Caco-2 (cell line): ENCODE measurements at regions of chr16 and their contacts with region 1.

Region 1: DNA sequence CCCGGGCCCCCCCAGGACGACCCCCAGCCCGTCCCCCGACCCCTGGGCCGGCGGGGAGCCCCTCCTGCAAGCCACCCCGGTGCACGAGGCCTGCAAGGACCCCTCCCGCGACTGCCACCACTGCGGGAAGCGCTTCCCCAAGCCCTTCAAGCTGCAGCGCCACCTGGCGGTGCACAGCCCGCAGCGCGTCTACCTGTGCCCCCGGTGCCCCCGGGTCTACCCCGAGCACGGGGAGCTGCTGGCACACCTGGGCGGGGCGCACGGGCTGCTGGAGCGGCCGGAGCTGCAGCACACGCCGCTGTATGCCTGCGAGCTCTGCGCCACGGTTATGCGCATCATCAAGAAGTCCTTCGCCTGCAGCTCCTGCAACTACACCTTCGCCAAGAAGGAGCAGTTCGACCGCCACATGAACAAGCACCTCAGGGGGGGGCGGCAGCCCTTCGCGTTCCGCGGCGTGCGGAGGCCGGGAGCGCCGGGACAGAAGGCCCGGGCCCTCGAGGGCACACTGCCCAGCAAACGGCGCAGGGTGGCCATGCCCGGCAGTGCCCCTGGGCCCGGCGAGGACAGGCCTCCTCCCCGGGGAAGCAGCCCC is 15.6 kb upstream of the ZFPM1 start:
- DNase-seq: peak; percentile 69 to 83
- H3K4me3 ChIP-seq: no peak overlapping the region
- H3K4me3 Mint-ChIP-seq: no peak overlapping the region
- H3K27ac Mint-ChIP-seq: no peak overlapping the region
- H3K4me1 ChIP-seq: 0 out of 2 replicates have a peak, but pooled peaks cover under 1% of the 10 kb centered on the region
- H3K4me1 Mint-ChIP-seq: no peaks in the 10 kb centered on the region
- H3K27me3 ChIP-seq: no peaks in the 10 kb centered on the region
- H3K27me3 Mint-ChIP-seq: no peaks in the 10 kb centered on the region
- CTCF ChIP-seq: peak; percentile 87 to 91

Region 2: DNA sequence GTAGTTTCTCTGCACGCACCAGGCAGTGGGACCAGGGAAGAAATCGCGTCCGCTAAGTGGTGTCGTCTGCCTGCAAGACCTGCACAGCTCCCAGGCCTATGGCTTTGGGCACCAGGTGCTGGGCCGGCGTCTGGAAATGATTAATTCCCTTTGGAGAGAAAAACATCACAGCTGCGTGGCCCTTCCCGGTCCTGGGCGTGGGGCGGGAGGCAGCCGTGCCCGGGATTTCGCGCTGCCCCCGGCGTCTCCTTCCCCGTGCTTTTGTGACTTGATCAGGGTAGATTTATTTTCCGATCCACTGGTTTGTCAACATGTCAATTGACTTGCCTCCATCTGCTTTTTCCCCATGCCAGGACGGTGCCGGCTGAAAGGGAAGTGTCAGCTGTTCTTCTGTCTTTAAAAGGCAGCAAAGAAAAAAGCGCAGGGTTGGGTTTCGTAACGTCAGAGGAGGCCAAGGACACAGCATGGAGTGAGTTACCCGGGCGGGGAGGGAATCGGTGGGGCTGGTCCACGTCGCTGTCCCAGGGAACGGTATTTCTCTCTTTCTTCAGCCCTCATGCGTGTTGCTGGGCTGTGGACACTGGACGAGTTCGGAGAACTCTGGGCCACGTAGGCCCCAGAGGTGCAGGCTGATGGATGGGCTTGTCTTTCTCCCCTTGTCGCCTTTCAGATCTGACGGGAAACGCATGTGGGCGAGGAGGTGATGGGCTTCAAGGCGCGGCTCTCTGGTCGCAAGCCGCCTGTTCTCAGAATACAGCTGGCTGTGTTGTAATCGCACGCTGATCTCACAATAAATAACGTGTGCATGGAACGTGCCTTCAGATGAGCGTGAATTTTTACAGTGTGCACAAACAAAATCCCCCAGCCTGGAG is 242.8 kb before region 1 on chr16:
- CTCF ChIA-PET with region 1: interaction called, 3 read pairs
- POLR2A ChIA-PET with region 1: no interaction called
- intact Hi-C with region 1: loop called (anchors 10 kb)
- DNase-seq: no peak
- H3K4me3 ChIP-seq: no peak overlapping the region
- H3K4me3 Mint-ChIP-seq: no peak overlapping the region
- H3K27ac Mint-ChIP-seq: no peak overlapping the region
- H3K4me1 ChIP-seq: no peaks in the 10 kb centered on the region; the same call in 1 of the 2 replicates
- H3K4me1 Mint-ChIP-seq: no peaks in the 10 kb centered on the region
- H3K27me3 ChIP-seq: no peaks in the 10 kb centered on the region
- H3K27me3 Mint-ChIP-seq: no peaks in the 10 kb centered on the region
- CTCF ChIP-seq: peak in 1 of 2 experiments; percentile 8

Region 3: GRCh38 chr16:88387941-88388627 is 49.4 kb before region 1 on chr16:
- CTCF ChIA-PET with region 1: no interaction called
- POLR2A ChIA-PET with region 1: no interaction called
- intact Hi-C with region 1: no loop called
- DNase-seq: no peak
- H3K4me3 ChIP-seq: no peak overlapping the region
- H3K4me3 Mint-ChIP-seq: no peak overlapping the region
- H3K27ac Mint-ChIP-seq: no peak overlapping the region
- H3K4me1 ChIP-seq: peaks cover 7% of the 10 kb centered on the region
- H3K4me1 Mint-ChIP-seq: no peaks in the 10 kb centered on the region
- H3K27me3 ChIP-seq: peaks cover 2% of the 10 kb centered on the region; the same call in 1 of the 2 replicates
- H3K27me3 Mint-ChIP-seq: peaks cover 27% of the 10 kb centered on the region
- CTCF ChIP-seq: no peak

Region 4: GRCh38 chr16:88497561-88498462 is 60.3 kb after region 1 on chr16:
- CTCF ChIA-PET with region 1: no interaction called
- POLR2A ChIA-PET with region 1: no interaction called
- intact Hi-C with region 1: no loop called
- DNase-seq: peak; percentile 82 to 93
- H3K4me3 ChIP-seq: no peak overlapping the region
- H3K4me3 Mint-ChIP-seq: peak overlapping the region; percentile 43
- H3K27ac Mint-ChIP-seq: peak overlapping the region; percentile 85
- H3K4me1 ChIP-seq: peaks cover 57% of the 10 kb centered on the region
- H3K4me1 Mint-ChIP-seq: peaks cover 36% of the 10 kb centered on the region
- H3K27me3 ChIP-seq: no peaks in the 10 kb centered on the region
- H3K27me3 Mint-ChIP-seq: no peaks in the 10 kb centered on the region
- CTCF ChIP-seq: no peak